Caco-2 (cell line): ENCODE measurements at regions of chr15 and their contacts with region 1.

Region 1: DNA sequence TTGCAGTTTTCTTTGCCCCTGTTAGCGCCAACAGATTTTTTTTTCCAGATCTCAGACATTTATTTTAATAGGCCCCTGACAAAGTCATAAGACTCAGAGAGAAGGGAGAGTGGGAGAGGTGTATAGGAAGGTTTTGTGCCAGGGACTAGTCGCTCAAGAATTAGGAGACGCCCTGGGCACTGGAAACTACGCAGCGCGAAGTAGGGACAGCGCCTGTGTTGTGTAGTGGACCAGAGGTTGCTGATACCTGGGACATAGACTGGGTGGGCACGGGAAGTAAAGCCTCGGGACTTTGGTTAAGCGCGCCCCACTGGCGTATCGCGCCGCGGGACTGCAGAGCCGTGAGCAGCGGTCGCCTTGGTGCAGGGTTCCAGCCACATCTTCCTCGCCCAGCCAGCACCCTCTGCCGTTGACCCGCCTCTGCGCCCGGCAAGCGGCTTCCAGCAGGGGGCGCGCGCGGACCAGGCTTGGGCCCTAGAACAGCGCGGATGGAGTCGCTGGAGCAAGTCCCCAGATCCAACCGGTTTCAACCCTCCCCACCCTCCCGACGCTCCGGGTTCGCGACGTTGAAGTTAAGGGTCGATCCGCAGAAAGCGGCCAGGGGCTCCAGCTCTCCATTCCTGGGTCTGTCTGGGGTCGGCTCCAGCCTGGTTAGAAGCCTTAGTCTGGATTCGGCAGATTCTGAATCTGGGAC is 3.0 kb upstream of the ISLR2 start:
- DNase-seq: peak; percentile 79 to 92
- H3K4me3 ChIP-seq: no peak overlapping the region
- H3K4me3 Mint-ChIP-seq: peak overlapping the region; percentile 45
- H3K27ac Mint-ChIP-seq: no peak overlapping the region
- H3K4me1 ChIP-seq: no peaks in the 10 kb centered on the region
- H3K4me1 Mint-ChIP-seq: no peaks in the 10 kb centered on the region
- H3K27me3 ChIP-seq: peaks cover 4% of the 10 kb centered on the region
- H3K27me3 Mint-ChIP-seq: peaks cover 54% of the 10 kb centered on the region
- CTCF ChIP-seq: peak; percentile 92 to 99

Region 2: DNA sequence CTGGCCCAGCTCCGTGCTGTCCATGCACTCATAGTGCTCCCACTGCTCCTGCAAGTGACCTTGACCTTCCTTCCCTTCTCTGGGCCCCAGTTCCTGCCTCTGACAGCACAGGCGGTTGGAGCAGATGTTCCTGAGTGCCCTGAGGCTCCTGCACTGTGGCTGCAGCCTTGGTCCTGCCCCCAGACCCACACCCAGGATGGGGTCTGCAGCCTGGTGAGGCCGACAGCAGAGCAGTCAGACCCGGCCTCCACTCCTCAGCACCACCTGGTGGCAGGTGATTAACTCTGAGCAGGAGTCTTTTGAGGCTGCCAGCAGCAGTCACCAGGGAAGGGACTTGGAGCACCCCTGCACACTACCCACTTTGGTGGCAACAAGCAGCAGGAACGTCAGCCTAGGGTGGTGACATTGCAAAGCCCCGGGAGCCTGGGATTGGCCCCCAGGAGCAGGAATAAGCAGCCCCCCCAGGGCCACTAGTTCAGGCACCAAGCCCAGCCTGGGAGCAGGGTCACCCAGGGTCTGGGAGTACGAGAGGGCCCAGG is 175.5 kb after region 1 on chr15:
- CTCF ChIA-PET with region 1: interaction called, 22 read pairs
- POLR2A ChIA-PET with region 1: no interaction called
- intact Hi-C with region 1: loop called (anchors 1 kb)
- DNase-seq: peak; percentile 51 to 66
- H3K4me3 ChIP-seq: no peak overlapping the region
- H3K4me3 Mint-ChIP-seq: no peak overlapping the region
- H3K27ac Mint-ChIP-seq: no peak overlapping the region
- H3K4me1 ChIP-seq: no peaks in the 10 kb centered on the region
- H3K4me1 Mint-ChIP-seq: no peaks in the 10 kb centered on the region
- H3K27me3 ChIP-seq: peaks cover 3% of the 10 kb centered on the region
- H3K27me3 Mint-ChIP-seq: peaks cover 43% of the 10 kb centered on the region
- CTCF ChIP-seq: peak; percentile 70 to 79